ENCODE measurements at regions of chr6 and their contacts with region 1.

Region 1: DNA sequence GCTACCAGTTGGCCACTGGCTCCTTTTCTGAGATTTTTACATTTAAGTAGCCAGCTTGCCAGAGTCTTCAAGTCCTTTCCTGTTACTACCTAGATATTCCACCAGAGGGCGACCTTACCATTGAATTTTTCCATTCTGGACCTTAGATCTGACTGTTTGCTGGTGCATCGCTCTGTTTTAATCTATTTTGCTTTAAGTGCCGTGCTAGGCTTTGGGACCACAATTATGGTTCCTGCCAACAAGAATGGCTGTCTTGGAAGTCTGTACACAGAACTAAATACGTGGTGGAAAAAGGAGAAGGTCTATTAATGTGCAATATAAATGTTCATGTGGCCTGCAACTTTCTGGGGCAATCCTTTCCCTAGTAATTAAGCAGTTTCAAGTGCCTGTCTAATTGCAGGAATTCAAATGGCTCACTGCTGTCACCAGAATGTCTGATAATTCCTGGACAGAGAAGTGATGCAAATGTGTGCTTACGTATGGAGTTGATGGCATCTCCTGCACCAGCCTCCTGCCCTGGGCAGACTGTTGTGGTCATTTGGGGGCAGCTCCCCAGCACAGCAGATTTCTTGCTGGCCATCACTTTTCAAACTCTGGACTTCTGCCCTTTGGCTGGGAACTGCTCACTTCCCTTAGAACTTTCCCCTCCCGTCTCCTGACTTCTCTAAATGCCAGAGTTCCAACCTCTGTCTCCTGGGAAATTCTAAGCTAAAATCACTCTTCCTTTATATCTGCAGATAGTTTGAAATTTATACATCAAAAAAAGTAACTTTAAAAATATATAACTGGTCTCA is 5.6 kb upstream of the HLA-DOA start:
- DNase-seq: peak in 4 of 5 donors; percentile 58 to 92 (median 80)
- H3K4me3 ChIP-seq: peak overlapping the region in 1 of 3 donors; percentile 36
- H3K27ac ChIP-seq: no peak overlapping the region
- H3K4me1 ChIP-seq: peaks cover 0 to 17% (median 11%) of the 10 kb centered on the region in 3 donors
- H3K27me3 ChIP-seq: no peaks in the 10 kb centered on the region
- CTCF ChIP-seq: peak; percentile 84

Region 2: GRCh38 chr6:33082702-33083101 is 67.7 kb after region 1 on chr6:
- intact Hi-C with region 1: loop called (anchors 5 kb)
- DNase-seq: peak in 2 of 5 donors; percentile 17 to 78
- H3K4me3 ChIP-seq: no peak overlapping the region
- H3K27ac ChIP-seq: no peak overlapping the region
- H3K4me1 ChIP-seq: peaks cover 0 to 4% (median 0%) of the 10 kb centered on the region in 3 donors
- H3K27me3 ChIP-seq: no peaks in the 10 kb centered on the region
- CTCF ChIP-seq: peak; percentile 34

Measured in kidney (tissue), 22 donors.